Adrenal gland (tissue), 19 donors: ENCODE measurements at regions of chr3 and their contacts with region 1.

Region 1: DNA sequence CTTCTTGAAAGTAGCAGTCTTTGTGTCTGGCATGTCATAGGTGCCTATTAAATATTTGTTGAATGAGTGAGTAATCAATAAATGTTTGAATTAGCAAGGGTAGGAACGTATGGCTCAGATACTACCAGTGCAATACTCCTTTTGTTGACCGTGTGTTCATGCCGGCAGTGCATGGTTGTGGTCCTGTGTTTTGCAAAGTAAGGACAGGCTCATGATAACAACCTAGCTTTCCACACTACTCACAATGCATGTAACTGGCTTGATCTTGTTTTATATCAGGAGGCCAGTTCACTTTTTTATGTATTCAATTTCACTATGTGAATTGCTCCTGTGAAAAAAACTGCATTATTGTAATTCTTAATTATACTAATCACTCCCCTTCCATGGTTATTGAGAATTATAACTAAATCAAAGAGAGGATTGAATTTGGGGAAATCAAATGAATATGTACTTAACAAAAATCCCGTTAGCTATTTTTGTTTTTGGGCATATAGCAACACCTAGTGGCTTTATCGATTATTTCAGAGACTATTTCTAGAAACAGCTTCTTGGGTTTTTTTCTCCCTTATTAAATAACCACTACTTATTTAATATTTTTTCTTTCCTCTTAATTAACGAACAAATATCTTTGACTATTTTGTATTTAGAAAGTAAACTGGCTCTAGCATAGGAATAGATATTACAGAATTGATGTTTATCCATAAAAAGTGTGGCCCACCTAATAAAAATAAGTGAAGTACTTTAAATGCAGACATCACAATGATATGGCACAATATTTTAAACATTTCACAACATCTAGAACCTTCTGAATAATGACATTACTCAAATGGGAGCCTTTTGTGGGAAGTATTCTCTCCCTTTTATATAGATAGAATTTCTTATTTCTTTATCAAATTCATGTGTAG is 218.5 kb downstream of the BBX start:
- DNase-seq: no peak
- H3K4me3 ChIP-seq: no peak overlapping the region
- H3K27ac ChIP-seq: no peak overlapping the region
- H3K4me1 ChIP-seq: peaks cover 0 to 4% of the 10 kb centered on the region in 2 donors
- H3K27me3 ChIP-seq: no peaks in the 10 kb centered on the region
- CTCF ChIP-seq: peak; percentile 34 to 80 (median 62)
- POLR2A ChIP-seq: no peak

Region 2: GRCh38 chr3:107574650-107575049 is 166.6 kb before region 1 on chr3:
- intact Hi-C with region 1: loop called in 1 of 2 experiments (anchors 10 kb)
- DNase-seq: peak in 1 of 7 donors; percentile 30
- H3K4me3 ChIP-seq: no peak overlapping the region
- H3K27ac ChIP-seq: no peak overlapping the region
- H3K4me1 ChIP-seq: no peaks in the 10 kb centered on the region
- H3K27me3 ChIP-seq: no peaks in the 10 kb centered on the region
- CTCF ChIP-seq: peak; percentile 44 to 71 (median 61)
- POLR2A ChIP-seq: no peak

Region 3: DNA sequence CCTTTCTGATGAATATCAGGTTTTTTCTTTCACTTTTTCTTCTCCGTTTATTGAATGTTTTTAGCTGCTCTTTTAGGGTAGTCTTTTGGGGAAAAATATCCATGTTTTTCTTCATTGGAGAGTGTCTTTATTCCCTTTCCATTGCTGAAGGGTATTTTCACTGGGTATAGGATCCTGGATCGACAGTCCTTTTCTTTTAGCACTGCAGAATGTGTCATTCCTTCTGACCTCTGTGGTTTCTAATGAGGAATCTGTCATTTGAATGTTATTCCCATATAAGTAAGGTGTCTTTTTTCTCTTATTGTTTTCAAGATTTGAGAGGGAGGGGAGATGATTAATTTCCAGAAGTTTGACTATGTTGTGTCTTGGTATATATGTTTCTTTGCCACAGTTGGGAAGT is 121.7 kb before region 1 on chr3:
- intact Hi-C with region 1: no loop called
- DNase-seq: no peak
- H3K4me3 ChIP-seq: no peak overlapping the region
- H3K27ac ChIP-seq: no peak overlapping the region
- H3K4me1 ChIP-seq: peaks cover 0 to 12% of the 10 kb centered on the region in 2 donors
- H3K27me3 ChIP-seq: no peaks in the 10 kb centered on the region
- CTCF ChIP-seq: no peak
- POLR2A ChIP-seq: no peak

Region 4: GRCh38 chr3:107676469-107677309 is 64.6 kb before region 1 on chr3:
- intact Hi-C with region 1: loop called (anchors 5 to 10 kb)
- DNase-seq: no peak
- H3K4me3 ChIP-seq: no peak overlapping the region
- H3K27ac ChIP-seq: peak overlapping the region in 1 of 5 donors; percentile 11
- H3K4me1 ChIP-seq: peaks cover 16 to 34% of the 10 kb centered on the region in 2 donors
- H3K27me3 ChIP-seq: no peaks in the 10 kb centered on the region
- CTCF ChIP-seq: peak; percentile 52 to 83 (median 64)
- POLR2A ChIP-seq: no peak